PC-9 (cell line): ENCODE measurements at regions of chr4 and their contacts with region 1.

Region 1: DNA sequence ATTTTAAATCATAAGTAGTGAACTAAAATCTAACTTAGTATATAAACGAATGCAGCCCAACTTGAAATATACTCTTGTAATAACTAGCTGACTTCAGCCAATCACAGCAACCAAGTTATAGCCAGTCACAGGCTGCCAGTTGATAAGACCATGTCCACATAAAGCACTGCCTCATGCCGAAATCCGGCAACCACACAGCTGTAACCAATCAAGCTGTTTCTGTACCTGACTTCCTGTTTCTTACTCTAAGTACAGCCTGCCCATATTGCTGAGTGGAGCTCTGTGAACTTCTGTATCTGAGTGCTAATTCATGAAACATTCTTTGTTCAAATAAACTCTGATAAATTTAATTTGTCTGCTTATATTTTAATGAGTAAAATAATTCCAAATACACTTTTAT is 805.3 kb upstream of the EPHA5 start:
- DNase-seq: no peak
- H3K4me3 ChIP-seq: no peak overlapping the region
- H3K27ac ChIP-seq: no peak overlapping the region
- H3K4me1 ChIP-seq: no peaks in the 10 kb centered on the region
- H3K27me3 ChIP-seq: no peaks in the 10 kb centered on the region
- CTCF ChIP-seq: no peak

Region 2: GRCh38 chr4:66357316-66357715 is 118.3 kb before region 1 on chr4:
- CTCF ChIA-PET with region 1: no interaction called
- POLR2A ChIA-PET with region 1: no interaction called
- intact Hi-C with region 1: no loop called
- DNase-seq: no peak
- H3K4me3 ChIP-seq: no peak overlapping the region
- H3K27ac ChIP-seq: no peak overlapping the region
- H3K4me1 ChIP-seq: no peaks in the 10 kb centered on the region
- H3K27me3 ChIP-seq: no peaks in the 10 kb centered on the region
- CTCF ChIP-seq: no peak

Region 3: GRCh38 chr4:66777097-66777496 is 301.5 kb after region 1 on chr4:
- CTCF ChIA-PET with region 1: no interaction called
- POLR2A ChIA-PET with region 1: interaction called, 24 read pairs
- intact Hi-C with region 1: no loop called
- DNase-seq: no peak
- H3K4me3 ChIP-seq: no peak overlapping the region
- H3K27ac ChIP-seq: no peak overlapping the region
- H3K4me1 ChIP-seq: no peaks in the 10 kb centered on the region
- H3K27me3 ChIP-seq: no peaks in the 10 kb centered on the region
- CTCF ChIP-seq: no peak

Region 4: DNA sequence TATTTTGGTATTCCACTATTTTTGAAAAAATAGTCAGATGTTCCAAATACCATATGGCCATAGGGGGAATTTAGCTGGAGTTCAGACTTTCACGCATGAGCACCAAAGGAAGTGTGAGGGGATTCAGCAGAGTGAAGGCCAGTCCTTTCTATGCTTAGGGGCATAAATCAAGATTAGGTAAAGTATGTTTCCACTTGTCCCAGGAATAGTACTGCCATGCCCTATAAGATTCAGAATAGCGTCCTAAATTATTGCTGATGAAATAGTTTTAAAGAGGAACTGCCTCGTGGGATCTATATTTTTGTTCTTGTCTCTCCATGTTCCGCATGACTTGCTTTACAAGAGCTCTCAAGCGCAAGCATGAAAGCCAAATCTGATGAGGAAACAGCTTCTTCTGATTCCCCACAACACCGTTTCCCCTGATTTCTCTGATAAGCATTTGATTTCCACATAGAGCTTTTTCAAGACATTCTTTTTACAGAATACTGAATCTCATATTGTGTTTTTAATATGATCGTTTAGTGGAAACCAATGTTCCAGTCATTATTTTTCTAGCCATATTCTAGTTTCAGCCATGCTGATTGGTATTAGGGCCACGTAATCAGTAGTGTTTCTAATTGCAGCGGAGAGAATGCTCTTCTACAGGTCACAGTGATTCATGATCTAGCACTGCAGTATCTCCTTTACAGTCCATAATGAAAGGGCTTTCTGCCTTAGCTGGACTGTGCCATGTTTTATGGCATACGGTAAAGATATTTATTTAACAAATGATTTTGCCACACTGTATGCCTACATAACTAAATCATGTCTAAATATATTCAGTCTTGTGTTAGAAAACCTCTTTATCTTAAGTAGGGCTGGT is 577.4 kb after region 1 on chr4:
- CTCF ChIA-PET with region 1: no interaction called
- POLR2A ChIA-PET with region 1: interaction called, 18 read pairs
- intact Hi-C with region 1: no loop called
- DNase-seq: no peak
- H3K4me3 ChIP-seq: no peak overlapping the region
- H3K27ac ChIP-seq: no peak overlapping the region
- H3K4me1 ChIP-seq: no peaks in the 10 kb centered on the region
- H3K27me3 ChIP-seq: no peaks in the 10 kb centered on the region
- CTCF ChIP-seq: no peak